Dendritic cell treated with granulocyte-macrophage colony-stimulating factor and Interleukin-4, amounts not matched to agents 40 ng/mL and 50 ng/mL, for 4 days (primary cell): ENCODE measurements at regions of chr20 and their contacts with region 1.

Region 1: DNA sequence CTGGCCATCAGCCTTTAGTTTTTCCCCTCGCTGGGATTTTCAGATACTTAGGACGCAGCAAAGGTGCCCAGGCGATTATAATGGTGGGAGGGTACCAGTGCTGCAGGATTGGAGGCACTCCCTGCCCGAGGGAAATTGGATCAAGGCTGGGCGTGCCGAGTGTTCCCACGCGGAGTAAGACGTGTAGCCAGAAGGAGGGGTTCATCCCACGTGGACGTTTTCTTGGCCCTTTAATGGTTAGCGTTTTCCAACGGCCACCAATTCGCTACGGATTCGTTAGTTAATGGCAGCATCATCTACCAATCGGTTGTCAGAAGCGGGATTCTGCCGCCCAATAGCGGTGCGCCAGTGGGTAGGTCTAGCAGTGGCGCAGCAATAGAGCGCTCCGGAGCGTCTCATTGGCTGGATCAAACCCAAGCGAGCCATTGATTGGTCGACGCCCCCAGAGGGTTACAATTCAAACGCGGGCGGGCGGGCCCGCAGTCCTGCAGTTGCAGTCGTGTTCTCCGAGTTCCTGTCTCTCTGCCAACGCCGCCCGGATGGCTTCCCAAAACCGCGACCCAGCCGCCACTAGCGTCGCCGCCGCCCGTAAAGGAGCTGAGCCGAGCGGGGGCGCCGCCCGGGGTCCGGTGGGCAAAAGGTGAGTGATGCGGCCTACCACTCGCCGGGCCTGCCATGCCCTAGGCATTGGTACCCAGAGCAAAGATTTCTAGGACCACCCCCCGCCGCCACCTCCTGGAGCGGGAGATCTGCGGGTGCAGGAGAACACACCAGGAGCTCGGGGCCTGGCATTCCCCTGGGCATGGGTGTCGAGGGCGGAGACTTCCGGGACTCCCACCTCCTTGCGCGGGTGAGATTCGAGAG is at the start of gene UBE2C:
- H3K4me3 Mint-ChIP-seq: peak within 1 kb of the TSS; percentile 83
- H3K27ac Mint-ChIP-seq: peak within 1 kb of the TSS; percentile 39
- H3K4me1 Mint-ChIP-seq: peaks cover 18% of the 10 kb centered on the region
- H3K27me3 Mint-ChIP-seq: no peaks in the 10 kb centered on the region

Region 2: DNA sequence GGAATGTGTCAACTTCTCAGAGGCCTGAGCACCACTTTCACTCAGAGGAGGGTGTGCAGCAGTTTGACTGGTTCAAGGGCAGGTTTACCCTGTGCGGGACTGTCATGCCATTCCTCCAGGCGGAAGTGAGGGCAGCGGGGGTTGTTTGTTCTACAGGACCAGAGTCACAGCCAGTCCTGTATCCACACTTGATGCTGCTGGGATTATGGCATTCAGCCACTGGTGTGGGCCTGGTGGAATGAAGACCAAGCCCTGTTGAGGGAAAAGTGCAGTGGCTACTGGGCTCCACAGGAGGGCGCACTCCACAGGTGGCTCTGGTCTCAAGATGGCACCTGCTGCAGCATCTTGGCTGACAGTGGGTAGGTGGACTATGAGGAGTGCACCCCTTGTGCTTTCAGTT is 576.4 kb before region 1 on chr20:
- intact Hi-C with region 1: no loop called
- H3K4me3 Mint-ChIP-seq: no peak overlapping the region
- H3K27ac Mint-ChIP-seq: no peak overlapping the region
- H3K4me1 Mint-ChIP-seq: no peaks in the 10 kb centered on the region
- H3K27me3 Mint-ChIP-seq: peaks cover 28% of the 10 kb centered on the region

Region 3: DNA sequence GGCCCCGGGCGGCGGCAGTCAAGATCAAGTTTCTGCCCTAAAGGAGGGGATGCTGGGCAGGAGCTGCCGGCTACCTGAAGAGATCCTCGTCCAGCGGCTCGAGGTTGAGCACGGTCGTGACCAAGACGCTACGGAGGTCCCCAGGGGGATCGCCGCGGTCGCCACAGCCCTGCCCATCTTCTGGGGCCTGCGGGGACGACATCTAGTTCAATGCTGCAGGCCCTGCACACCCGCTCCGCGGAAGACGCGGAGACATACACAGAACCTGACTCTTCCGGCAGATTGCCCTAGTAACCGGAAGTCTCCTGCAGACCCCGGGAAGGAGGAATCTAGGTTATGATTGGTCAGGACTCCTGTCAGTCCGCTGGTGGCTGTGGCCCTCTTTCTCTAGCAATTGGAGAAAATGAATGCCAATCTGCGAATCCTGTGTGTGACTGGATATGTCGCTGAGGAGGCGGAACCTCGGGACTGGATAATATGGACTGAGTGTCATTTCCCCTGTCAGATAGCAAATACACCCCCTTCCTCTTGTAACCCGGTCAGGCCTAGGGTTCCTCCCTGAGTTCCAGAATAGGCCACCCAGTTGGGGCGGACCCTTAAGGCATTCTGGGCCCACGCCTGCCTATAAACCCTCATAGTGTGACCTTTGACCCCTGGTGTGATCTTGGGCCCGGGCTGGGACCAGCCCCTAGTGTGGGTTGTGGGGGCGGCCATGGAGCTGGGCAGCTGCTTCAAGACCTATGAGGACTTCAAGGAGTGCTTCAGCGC is 44.9 kb after region 1 on chr20 and contains the starts of genes ACOT8 and ZSWIM3:
- intact Hi-C with region 1: loop called (anchors 2 kb)
- H3K4me3 Mint-ChIP-seq: peak within 1 kb of the TSS; percentile 91
- H3K27ac Mint-ChIP-seq: peak within 1 kb of the TSS; percentile 96
- H3K4me1 Mint-ChIP-seq: peaks cover 59% of the 10 kb centered on the region
- H3K27me3 Mint-ChIP-seq: no peaks in the 10 kb centered on the region